Dendritic cell treated with granulocyte-macrophage colony-stimulating factor and Interleukin-4, amounts not matched to agents 40 ng/mL and 50 ng/mL, for 4 days (primary cell): ENCODE measurements at regions of chr1 and their contacts with region 1.

Region 1: DNA sequence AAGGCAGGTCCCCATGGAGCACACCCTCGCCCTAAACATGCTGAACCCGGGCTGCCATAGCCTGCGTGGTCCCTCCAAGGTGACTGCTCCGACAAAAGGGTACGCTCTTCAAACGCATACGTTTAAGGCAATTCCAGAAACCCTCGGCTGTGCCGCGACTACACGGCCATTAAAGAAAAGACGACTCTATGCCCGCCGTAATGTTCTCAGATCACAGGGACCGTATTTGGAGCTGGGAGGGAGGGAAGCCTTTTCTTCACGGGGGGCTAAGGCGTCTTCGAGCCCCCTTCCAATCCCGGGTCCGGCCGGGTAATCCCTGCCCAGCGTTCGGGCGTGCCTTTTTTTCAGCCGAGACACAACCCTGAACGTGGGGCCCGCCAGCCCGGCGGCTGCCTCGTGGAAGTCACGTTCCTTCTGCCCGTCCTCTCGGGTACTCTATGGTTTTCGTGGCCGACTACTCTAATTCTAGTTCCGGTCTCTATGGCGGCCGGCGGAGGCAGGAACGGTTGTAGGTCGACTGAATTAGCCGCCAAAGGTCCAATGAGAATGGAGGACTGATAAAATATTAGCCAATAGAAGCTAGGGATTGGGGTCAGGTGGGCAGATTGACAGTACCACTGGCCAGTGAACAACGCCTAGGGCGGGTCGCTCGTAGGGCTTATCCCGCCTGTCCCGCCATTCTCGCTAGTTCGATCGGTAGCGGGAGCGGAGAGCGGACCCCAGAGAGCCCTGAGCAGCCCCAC is at the start of gene YBX1:
- H3K4me3 Mint-ChIP-seq: peak within 1 kb of the TSS; percentile 92
- H3K27ac Mint-ChIP-seq: peak within 1 kb of the TSS; percentile 94
- H3K4me1 Mint-ChIP-seq: peaks cover 49% of the 10 kb centered on the region
- H3K27me3 Mint-ChIP-seq: no peaks in the 10 kb centered on the region

Region 2: GRCh38 chr1:42456010-42456758 is 225.7 kb before region 1 on chr1 and contains the starts of genes PPCS and ZMYND12:
- intact Hi-C with region 1: loop called (anchors 1 kb)
- H3K4me3 Mint-ChIP-seq: peak within 1 kb of the TSS; percentile 84
- H3K27ac Mint-ChIP-seq: peak within 1 kb of the TSS; percentile 90
- H3K4me1 Mint-ChIP-seq: peaks cover 40% of the 10 kb centered on the region
- H3K27me3 Mint-ChIP-seq: no peaks in the 10 kb centered on the region

Region 3: DNA sequence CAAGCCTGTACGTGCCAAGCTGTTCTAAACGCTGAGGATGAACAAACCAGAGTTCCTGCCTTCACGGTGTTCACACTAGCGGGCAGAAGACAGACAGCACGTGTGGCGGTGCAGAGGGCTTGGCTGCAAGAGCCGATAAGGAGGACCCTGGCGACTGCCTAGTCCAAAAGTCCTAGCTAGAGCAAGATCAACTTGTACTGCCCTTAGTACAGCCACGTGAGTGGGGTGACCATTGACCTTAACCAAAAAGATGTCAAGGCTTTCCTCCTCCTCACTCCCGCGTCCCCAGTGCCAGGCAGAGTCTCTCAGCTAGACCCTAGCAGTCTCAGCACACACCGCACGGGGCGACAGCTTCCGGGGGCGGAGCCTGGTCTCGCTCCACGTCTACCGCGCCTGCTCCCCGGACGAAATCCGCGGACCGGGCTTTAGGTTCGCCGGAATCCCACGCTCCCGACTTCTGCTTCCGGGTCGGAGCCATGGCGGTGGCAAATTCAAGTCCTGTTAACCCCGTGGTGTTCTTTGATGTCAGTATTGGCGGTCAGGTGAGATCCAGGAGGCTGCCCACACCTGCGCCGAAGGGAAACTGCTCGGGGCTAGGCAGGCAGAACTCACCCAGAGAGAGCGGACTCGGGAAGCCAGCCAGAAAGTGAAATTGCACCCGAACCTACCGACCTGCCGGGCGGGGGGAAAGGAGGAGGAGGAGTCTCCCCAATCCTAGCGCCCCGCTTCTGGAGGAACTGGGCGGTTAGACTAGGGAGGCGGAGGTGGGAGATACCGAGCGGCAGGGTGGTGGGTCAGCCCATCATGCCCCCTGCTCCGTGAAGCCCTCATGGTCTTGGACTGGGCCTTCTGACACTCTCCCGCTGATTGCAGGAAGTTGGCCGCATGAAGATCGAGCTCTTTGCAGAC is 23.7 kb before region 1 on chr1 and contains the start of gene PPIH:
- intact Hi-C with region 1: loop called (anchors 1 kb)
- H3K4me3 Mint-ChIP-seq: peak within 1 kb of the TSS; percentile 98
- H3K27ac Mint-ChIP-seq: peak within 1 kb of the TSS; percentile 89
- H3K4me1 Mint-ChIP-seq: peaks cover 19% of the 10 kb centered on the region
- H3K27me3 Mint-ChIP-seq: no peaks in the 10 kb centered on the region

Region 4: DNA sequence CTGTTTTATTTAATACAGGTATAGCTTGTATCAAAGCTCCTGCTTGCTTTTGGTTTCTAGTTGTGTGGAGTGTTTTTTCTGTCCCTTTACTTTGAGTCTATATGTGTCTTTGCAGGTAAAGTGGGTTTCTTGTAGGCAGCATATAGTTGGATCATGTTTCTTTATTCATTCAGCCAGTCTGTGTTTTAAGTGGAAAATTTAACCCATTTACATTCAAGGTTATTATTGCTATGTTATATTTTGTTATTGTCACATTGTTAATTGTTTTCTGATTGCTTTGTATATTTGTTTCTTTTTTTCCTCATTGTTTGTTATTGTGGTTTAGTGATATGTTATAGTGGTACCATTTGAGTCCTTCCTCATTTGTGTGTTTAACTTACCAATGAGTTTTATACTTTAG is 31.4 kb after region 1 on chr1:
- intact Hi-C with region 1: no loop called
- H3K4me3 Mint-ChIP-seq: no peak overlapping the region
- H3K27ac Mint-ChIP-seq: no peak overlapping the region
- H3K4me1 Mint-ChIP-seq: peaks cover 7% of the 10 kb centered on the region
- H3K27me3 Mint-ChIP-seq: no peaks in the 10 kb centered on the region

Region 5: DNA sequence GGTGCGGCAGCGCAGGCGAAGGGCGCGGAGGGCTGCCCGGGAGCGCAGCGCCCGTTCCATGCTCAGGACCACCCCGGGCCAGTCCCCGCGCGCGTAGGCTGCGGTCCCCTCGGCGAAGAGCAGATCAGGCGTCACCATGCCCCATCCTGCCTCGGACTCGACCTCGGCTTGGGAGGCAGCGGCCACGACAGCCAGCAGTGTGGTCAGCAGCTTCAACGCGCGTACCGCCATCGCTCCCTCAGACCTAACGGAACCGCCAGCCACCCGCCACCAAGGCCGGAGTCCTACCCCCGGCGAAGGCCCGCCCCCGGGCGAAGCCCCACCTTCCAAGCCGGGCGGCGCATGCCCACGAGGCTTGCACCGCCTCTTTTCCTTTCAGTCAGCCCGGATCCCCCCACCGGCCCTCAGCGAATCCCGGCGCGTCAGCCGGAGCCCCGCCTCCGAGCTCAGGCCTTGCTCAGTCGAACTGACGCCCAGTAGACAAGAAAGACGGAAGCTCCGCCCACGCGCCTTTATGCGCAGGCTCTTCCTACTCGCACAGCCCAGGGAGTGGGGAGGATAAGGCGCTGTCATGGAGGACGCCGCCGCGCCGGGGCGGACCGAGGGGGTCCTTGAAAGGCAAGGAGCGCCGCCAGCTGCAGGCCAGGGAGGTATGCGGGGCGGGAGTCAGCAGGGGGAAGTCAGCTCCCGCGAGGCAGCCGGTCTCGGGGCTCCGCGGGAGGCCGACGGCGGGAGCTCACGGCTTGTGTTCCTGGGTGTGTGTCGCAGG is 85.0 kb after region 1 on chr1 and contains the starts of genes C1orf50 and P3H1:
- intact Hi-C with region 1: loop called (anchors 5 kb)
- H3K4me3 Mint-ChIP-seq: no peak within 1 kb of the TSS
- H3K27ac Mint-ChIP-seq: no peak within 1 kb of the TSS
- H3K4me1 Mint-ChIP-seq: peaks cover 39% of the 10 kb centered on the region
- H3K27me3 Mint-ChIP-seq: no peaks in the 10 kb centered on the region